ENCODE measurements at regions of chr3 and their contacts with region 1.

Region 1: DNA sequence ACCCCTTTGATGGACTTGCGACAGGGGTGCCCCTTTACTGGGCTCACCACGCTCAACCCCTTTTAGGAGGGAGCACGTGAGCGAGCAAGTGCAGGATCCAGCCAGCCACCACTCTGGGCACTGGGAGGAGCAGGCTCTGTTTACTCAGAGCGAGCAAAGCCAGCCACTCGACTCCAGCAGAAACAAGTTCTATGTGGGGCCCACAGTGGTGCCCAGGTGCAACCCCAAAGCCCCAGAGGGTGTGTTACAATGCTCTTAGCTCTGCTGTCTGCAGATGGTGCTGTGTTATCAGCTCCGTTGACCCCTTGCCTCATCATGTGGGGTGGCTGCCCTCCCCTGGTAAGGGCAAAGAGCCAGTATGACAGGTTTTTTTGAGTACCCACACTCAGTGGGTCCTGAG is 120.3 kb upstream of the SUCLG2 start:
- DNase-seq: no peak
- H3K4me3 ChIP-seq: no peak overlapping the region
- H3K4me3 Mint-ChIP-seq: no peak overlapping the region
- H3K27ac Mint-ChIP-seq: no peak overlapping the region
- H3K4me1 ChIP-seq: no peaks in the 10 kb centered on the region
- H3K4me1 Mint-ChIP-seq: no peaks in the 10 kb centered on the region
- H3K27me3 ChIP-seq: no peaks in the 10 kb centered on the region
- H3K27me3 Mint-ChIP-seq: peaks cover 7% of the 10 kb centered on the region
- CTCF ChIP-seq: no peak

Region 2: DNA sequence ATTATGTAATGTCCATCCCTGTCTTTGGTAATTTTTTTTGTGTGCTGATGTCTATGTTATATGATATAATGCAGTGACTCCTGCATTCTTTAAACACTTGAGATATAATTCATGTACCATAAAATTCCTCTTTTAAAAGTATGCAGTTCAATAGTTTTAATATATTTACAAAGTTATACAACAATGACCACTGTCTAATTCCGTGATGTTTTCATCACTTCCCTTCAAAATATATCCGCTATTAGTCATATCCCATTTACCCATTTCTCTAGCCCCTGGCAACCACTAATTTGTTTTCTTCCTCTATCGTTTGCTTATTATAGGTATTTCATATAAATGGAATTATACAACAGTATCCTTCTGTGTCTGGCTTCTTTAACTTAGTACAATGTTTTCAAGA is 55.3 kb before region 1 on chr3:
- CTCF ChIA-PET with region 1: no interaction called
- POLR2A ChIA-PET with region 1: no interaction called
- intact Hi-C with region 1: loop called (anchors 10 kb)
- DNase-seq: no peak
- H3K4me3 ChIP-seq: no peak overlapping the region
- H3K4me3 Mint-ChIP-seq: no peak overlapping the region
- H3K27ac Mint-ChIP-seq: no peak overlapping the region
- H3K4me1 ChIP-seq: peaks cover 3% of the 10 kb centered on the region; the same call in 1 of the 2 replicates
- H3K4me1 Mint-ChIP-seq: peaks cover 2% of the 10 kb centered on the region
- H3K27me3 ChIP-seq: no peaks in the 10 kb centered on the region
- H3K27me3 Mint-ChIP-seq: no peaks in the 10 kb centered on the region
- CTCF ChIP-seq: no peak

Region 3: GRCh38 chr3:67804089-67804488 is 29.4 kb after region 1 on chr3:
- CTCF ChIA-PET with region 1: no interaction called
- POLR2A ChIA-PET with region 1: no interaction called
- intact Hi-C with region 1: no loop called
- DNase-seq: no peak
- H3K4me3 ChIP-seq: no peak overlapping the region
- H3K4me3 Mint-ChIP-seq: no peak overlapping the region
- H3K27ac Mint-ChIP-seq: no peak overlapping the region
- H3K4me1 ChIP-seq: no peaks in the 10 kb centered on the region
- H3K4me1 Mint-ChIP-seq: peaks cover 7% of the 10 kb centered on the region
- H3K27me3 ChIP-seq: no peaks in the 10 kb centered on the region
- H3K27me3 Mint-ChIP-seq: peaks cover 4% of the 10 kb centered on the region
- CTCF ChIP-seq: no peak

Region 4: GRCh38 chr3:68290333-68290732 is 515.7 kb after region 1 on chr3:
- CTCF ChIA-PET with region 1: no interaction called
- POLR2A ChIA-PET with region 1: no interaction called
- intact Hi-C with region 1: no loop called
- DNase-seq: no peak
- H3K4me3 ChIP-seq: no peak overlapping the region
- H3K4me3 Mint-ChIP-seq: no peak overlapping the region
- H3K27ac Mint-ChIP-seq: no peak overlapping the region
- H3K4me1 ChIP-seq: no peaks in the 10 kb centered on the region
- H3K4me1 Mint-ChIP-seq: no peaks in the 10 kb centered on the region
- H3K27me3 ChIP-seq: no peaks in the 10 kb centered on the region
- H3K27me3 Mint-ChIP-seq: peaks cover 3% of the 10 kb centered on the region
- CTCF ChIP-seq: no peak